ENCODE measurements at regions of chr3 and their contacts with region 1.

Region 1: DNA sequence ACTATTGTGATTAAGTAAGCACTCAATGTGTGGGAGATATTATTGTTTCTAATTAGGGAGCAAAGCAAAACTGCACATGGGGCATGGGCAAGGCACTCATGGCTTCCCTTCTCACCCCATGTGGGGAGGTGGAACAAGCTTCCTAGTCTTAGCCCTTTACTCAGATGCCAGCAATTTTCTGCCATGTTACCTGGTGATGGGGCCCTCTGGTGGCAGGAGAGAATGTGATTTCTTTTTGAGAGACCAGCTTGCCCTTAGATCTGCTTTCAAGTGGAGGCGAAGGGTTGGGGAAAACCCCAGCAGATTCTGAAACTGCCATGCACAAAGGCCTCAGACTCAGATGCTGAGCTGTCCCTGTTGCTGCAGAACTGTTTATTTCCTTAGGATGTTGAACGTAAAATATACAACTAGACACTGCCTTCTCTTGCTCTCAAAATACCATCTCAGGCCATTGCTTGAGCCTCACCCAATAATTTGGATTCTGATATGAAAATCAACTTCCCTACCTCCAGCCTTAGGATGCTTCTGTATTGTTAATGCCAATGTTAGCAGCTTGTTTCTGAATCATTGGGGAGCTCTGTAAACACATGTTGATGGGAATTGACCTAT is 130.2 kb upstream of the TPRG1 start:
- DNase-seq: peak; percentile 86
- H3K4me3 Mint-ChIP-seq: no peak overlapping the region
- H3K27ac Mint-ChIP-seq: peak overlapping the region; percentile 12
- H3K4me1 Mint-ChIP-seq: peaks cover 48% of the 10 kb centered on the region
- H3K27me3 Mint-ChIP-seq: no peaks in the 10 kb centered on the region

Region 2: GRCh38 chr3:189139611-189139940 is 98.0 kb after region 1 on chr3:
- CTCF ChIA-PET with region 1: interaction called, 11 read pairs
- POLR2A ChIA-PET with region 1: no interaction called
- DNase-seq: no peak
- H3K4me3 Mint-ChIP-seq: no peak overlapping the region
- H3K27ac Mint-ChIP-seq: no peak overlapping the region
- H3K4me1 Mint-ChIP-seq: peaks cover 30% of the 10 kb centered on the region
- H3K27me3 Mint-ChIP-seq: peaks cover 2% of the 10 kb centered on the region

Region 3: DNA sequence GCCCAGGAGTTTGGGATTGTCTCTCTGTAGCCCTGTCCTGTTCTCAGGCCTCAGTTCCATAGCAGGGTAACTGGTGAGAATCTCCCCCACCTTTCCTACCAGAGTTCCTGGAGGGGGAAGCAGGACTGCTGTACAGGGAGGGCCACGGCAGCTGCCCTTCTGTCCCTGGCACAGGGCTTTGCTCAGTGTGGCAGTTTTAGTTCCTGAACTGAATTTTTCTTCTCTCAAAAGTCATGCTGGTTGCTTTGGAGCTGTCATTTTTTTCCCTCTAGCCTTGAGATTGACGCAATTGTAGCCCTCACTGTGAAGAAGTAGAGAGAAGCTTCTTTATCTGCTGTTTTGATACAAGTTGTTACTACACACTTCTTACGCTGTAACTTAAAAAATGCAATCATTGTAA is 185.7 kb after region 1 on chr3:
- CTCF ChIA-PET with region 1: no interaction called
- POLR2A ChIA-PET with region 1: interaction called, 10 read pairs
- DNase-seq: no peak
- H3K4me3 Mint-ChIP-seq: no peak overlapping the region
- H3K27ac Mint-ChIP-seq: no peak overlapping the region
- H3K4me1 Mint-ChIP-seq: no peaks in the 10 kb centered on the region
- H3K27me3 Mint-ChIP-seq: no peaks in the 10 kb centered on the region

Measured in activated CD4-positive, alpha-beta T cell treated with anti-CD3 and anti-CD28 coated beads, Interleukin-2, amount 10 ng/mL, durations not matched to agents 7 days and 5 days (primary cell).